ENCODE measurements at regions of chr1 and their contacts with region 1.

Region 1: GRCh38 chr1:40338745-40339424 is 21.8 kb upstream of the COL9A2 start:
- DNase-seq: peak; percentile 84 to 94
- ATAC-seq: peak; percentile 92 to 100 (median 99)
- H3K4me3 ChIP-seq: no peak overlapping the region
- H3K4me3 Mint-ChIP-seq: no peak overlapping the region
- H3K27ac ChIP-seq: no peak overlapping the region
- H3K27ac Mint-ChIP-seq: peak overlapping the region in 1 of 2 donors; percentile 32
- H3K4me1 ChIP-seq: peaks cover 13% of the 10 kb centered on the region
- H3K4me1 Mint-ChIP-seq: peaks cover 6 to 7% of the 10 kb centered on the region in 2 donors
- H3K27me3 ChIP-seq: no peaks in the 10 kb centered on the region
- H3K27me3 Mint-ChIP-seq: peaks cover 0 to 8% of the 10 kb centered on the region in 2 donors
- CTCF ChIP-seq: peak; percentile 99

Region 2: DNA sequence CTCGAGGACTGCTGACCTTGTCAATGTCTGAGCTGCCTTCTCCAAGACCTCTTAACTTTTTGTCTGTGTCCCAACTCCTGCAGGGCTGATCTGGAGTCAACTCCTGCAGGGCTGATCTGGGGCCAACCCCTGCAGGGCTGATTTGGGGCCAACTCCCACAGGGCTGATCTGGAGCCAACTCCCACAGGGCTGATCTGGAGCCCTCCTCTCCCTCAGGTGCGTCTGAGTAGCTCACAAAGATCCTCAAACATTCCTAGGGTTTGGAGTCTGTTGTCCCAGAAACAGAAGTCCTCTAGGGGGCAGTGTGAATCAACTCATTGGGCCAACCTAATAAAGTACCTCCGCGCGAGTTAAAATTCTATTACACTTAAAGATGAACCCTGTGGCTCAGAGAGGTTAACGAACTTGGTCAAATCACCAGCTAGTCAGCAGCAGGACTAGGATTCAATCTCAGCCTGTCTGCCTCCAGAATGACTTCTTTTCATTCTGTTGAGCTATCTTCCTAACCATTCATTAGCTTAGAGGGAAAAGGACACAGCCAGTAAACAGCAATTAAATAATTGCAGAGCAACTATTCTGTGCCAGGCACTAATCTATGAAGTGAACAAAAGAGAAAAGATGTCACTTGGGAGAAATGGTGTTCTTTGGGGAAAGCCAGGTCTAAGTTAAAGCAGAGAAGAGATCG is 194.9 kb before region 1 on chr1:
- intact Hi-C with region 1: loop called (anchors 2 kb)
- DNase-seq: peak in 1 of 2 donors; percentile 85
- ATAC-seq: peak; percentile 75 to 84 (median 82)
- H3K4me3 ChIP-seq: no peak overlapping the region
- H3K4me3 Mint-ChIP-seq: no peak overlapping the region
- H3K27ac ChIP-seq: no peak overlapping the region
- H3K27ac Mint-ChIP-seq: no peak overlapping the region
- H3K4me1 ChIP-seq: no peaks in the 10 kb centered on the region
- H3K4me1 Mint-ChIP-seq: peaks cover 4 to 6% of the 10 kb centered on the region in 2 donors
- H3K27me3 ChIP-seq: peaks cover 2% of the 10 kb centered on the region
- H3K27me3 Mint-ChIP-seq: peaks cover 35 to 50% of the 10 kb centered on the region in 2 donors
- CTCF ChIP-seq: peak; percentile 79

Region 3: GRCh38 chr1:40153073-40153770 is 185.7 kb before region 1 on chr1:
- intact Hi-C with region 1: loop called (anchors 1 kb)
- DNase-seq: peak in 1 of 2 donors; percentile 85
- ATAC-seq: peak; percentile 66 to 89 (median 75)
- H3K4me3 ChIP-seq: no peak overlapping the region
- H3K4me3 Mint-ChIP-seq: no peak overlapping the region
- H3K27ac ChIP-seq: peak overlapping the region; percentile 31
- H3K27ac Mint-ChIP-seq: no peak overlapping the region
- H3K4me1 ChIP-seq: no peaks in the 10 kb centered on the region
- H3K4me1 Mint-ChIP-seq: peaks cover 0 to 5% of the 10 kb centered on the region in 2 donors
- H3K27me3 ChIP-seq: no peaks in the 10 kb centered on the region
- H3K27me3 Mint-ChIP-seq: peaks cover 3 to 12% of the 10 kb centered on the region in 2 donors
- CTCF ChIP-seq: peak; percentile 79

Region 4: DNA sequence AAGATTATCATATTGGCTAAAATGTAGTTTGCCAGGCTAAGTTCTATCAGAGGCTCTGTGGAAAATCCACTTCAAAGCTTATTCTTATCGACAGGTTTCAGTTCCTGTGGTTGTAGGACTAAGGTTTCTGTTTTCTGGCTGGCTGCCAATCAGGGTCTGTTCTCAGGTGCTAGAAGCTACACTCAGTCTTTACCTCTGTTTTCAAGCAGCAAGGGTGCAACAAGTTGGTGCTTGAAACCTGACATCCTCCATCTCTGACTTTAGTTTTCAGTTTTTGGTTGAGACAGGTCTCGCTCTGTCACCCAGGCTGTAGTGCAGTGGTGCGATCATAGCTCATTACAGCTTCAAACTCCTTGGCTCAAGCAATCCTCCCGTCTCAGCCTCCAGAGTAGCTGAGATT is 106.4 kb before region 1 on chr1:
- intact Hi-C with region 1: no loop called
- DNase-seq: peak in 1 of 2 donors; percentile 61
- ATAC-seq: no peak
- H3K4me3 ChIP-seq: no peak overlapping the region
- H3K4me3 Mint-ChIP-seq: no peak overlapping the region
- H3K27ac ChIP-seq: no peak overlapping the region
- H3K27ac Mint-ChIP-seq: no peak overlapping the region
- H3K4me1 ChIP-seq: no peaks in the 10 kb centered on the region
- H3K4me1 Mint-ChIP-seq: no peaks in the 10 kb centered on the region
- H3K27me3 ChIP-seq: no peaks in the 10 kb centered on the region
- H3K27me3 Mint-ChIP-seq: no peaks in the 10 kb centered on the region
- CTCF ChIP-seq: no peak

Region 5: GRCh38 chr1:40315239-40315794 is 23.6 kb before region 1 on chr1:
- intact Hi-C with region 1: no loop called
- DNase-seq: peak; percentile 80 to 93
- ATAC-seq: peak; percentile 83 to 93 (median 83)
- H3K4me3 ChIP-seq: peak overlapping the region; percentile 46
- H3K4me3 Mint-ChIP-seq: peak overlapping the region; percentile 92
- H3K27ac ChIP-seq: no peak overlapping the region
- H3K27ac Mint-ChIP-seq: peak overlapping the region in 1 of 2 donors; percentile 75
- H3K4me1 ChIP-seq: peaks cover 51% of the 10 kb centered on the region
- H3K4me1 Mint-ChIP-seq: peaks cover 27 to 33% of the 10 kb centered on the region in 2 donors
- H3K27me3 ChIP-seq: peaks cover 18% of the 10 kb centered on the region
- H3K27me3 Mint-ChIP-seq: peaks cover 20% of the 10 kb centered on the region in 2 donors
- CTCF ChIP-seq: peak; percentile 90